PC-9 (cell line): ENCODE measurements at regions of chr10 and their contacts with region 1.

Region 1: GRCh38 chr10:93088466-93088865 is 14.8 kb downstream of the CYP26A1 start:
- DNase-seq: no peak
- H3K4me3 ChIP-seq: no peak overlapping the region
- H3K27ac ChIP-seq: no peak overlapping the region
- H3K4me1 ChIP-seq: no peaks in the 10 kb centered on the region; the same call in 1 of the 2 replicates
- H3K27me3 ChIP-seq: no peaks in the 10 kb centered on the region
- CTCF ChIP-seq: no peak

Region 2: GRCh38 chr10:92880233-92880861 is 208.1 kb before region 1 on chr10:
- CTCF ChIA-PET with region 1: no interaction called
- POLR2A ChIA-PET with region 1: no interaction called
- intact Hi-C with region 1: no loop called
- DNase-seq: peak in 1 of 2 experiments; percentile 9
- H3K4me3 ChIP-seq: no peak overlapping the region
- H3K27ac ChIP-seq: no peak overlapping the region
- H3K4me1 ChIP-seq: no peaks in the 10 kb centered on the region
- H3K27me3 ChIP-seq: no peaks in the 10 kb centered on the region
- CTCF ChIP-seq: peak; percentile 76

Region 3: GRCh38 chr10:94194256-94194655 is 1105.8 kb after region 1 on chr10:
- CTCF ChIA-PET with region 1: no interaction called
- POLR2A ChIA-PET with region 1: interaction called, 12 read pairs
- intact Hi-C with region 1: no loop called
- DNase-seq: no peak
- H3K4me3 ChIP-seq: no peak overlapping the region
- H3K27ac ChIP-seq: no peak overlapping the region
- H3K4me1 ChIP-seq: no peaks in the 10 kb centered on the region
- H3K27me3 ChIP-seq: no peaks in the 10 kb centered on the region
- CTCF ChIP-seq: no peak